CD4-positive, alpha-beta memory T cell (primary cell): ENCODE measurements at regions of chr3 and their contacts with region 1.

Region 1: DNA sequence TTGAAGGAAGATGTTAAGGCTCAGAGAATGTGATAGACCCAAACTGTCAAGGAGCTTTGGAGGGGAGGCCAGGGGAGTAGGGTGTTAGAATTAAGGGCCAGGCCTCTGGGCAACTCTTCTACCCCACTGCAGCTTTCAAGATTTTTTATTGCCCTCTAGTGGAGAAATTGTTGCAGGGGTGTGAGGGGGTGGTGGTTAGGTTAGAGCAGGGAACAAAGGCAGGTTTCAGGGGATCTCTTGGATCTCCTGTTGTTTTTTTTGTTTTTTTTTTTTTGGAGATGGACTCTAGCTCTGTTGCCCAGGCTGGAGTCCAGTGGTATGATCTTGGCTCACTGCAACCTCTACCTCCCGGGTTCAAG is 1.4 kb upstream of the SEC13 start:
- DNase-seq: peak in 3 of 5 donors; percentile 22 to 33 (median 23)
- H3K4me3 ChIP-seq: no peak overlapping the region
- H3K4me3 Mint-ChIP-seq: peak overlapping the region in 3 of 8 donors; percentile 20 to 92 (median 46)
- H3K27ac ChIP-seq: no peak overlapping the region
- H3K27ac Mint-ChIP-seq: peak overlapping the region in 5 of 7 donors; percentile 81 to 97 (median 86)
- H3K4me1 ChIP-seq: peaks cover 28% of the 10 kb centered on the region
- H3K4me1 Mint-ChIP-seq: peaks cover 18 to 42% (median 29%) of the 10 kb centered on the region in 4 donors
- H3K27me3 ChIP-seq: peaks cover 6% of the 10 kb centered on the region
- H3K27me3 Mint-ChIP-seq: peaks cover 2 to 5% of the 10 kb centered on the region in 2 donors

Region 2: DNA sequence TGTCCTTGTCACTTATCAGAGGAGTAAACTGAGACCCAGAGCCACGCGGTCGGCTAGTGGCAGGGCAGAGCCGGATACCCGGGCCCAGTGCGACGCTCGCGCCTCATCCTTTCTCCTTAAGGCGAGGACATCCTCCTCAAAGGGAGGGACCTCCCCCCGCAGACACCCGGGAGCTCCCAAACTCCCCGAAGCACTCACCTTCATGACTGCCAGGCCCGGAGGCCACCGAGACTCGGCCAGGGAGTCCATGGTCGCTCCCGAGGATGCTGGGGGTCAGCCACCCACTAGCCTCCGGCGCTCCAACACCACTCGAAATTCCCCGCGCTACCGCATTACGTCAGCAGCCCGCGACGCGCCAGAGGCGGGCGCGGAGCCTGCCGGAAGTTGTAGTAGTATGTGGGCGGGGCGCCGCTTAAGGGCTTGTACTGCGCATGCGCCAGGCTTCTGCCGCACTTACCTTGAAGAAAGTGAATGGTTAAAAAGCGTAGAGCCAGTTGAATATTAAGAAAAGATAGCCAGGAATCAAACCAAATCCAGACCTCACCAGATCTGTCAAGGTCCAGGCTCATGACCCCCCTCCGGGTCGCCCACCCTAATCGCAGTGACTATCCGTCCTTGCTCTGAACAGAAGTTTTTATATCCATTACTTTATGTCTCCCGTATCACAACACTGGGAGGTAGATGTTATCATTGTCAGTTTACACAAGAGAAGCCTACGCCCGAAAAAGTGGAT is 1359.0 kb before region 1 on chr3 and contains the start of gene RAD18:
- CTCF ChIA-PET with region 1: no interaction called
- POLR2A ChIA-PET with region 1: no interaction called
- intact Hi-C with region 1: loop called (anchors 2 kb)
- DNase-seq: peak; percentile 91 to 94 (median 92)
- H3K4me3 ChIP-seq: peak within 1 kb of the TSS; percentile 87 to 92
- H3K4me3 Mint-ChIP-seq: peak within 1 kb of the TSS; percentile 92 to 97 (median 94)
- H3K27ac ChIP-seq: peak within 1 kb of the TSS; percentile 94
- H3K27ac Mint-ChIP-seq: peak within 1 kb of the TSS; percentile 96 to 99 (median 98)
- H3K4me1 ChIP-seq: peaks cover 21% of the 10 kb centered on the region
- H3K4me1 Mint-ChIP-seq: peaks cover 13 to 39% (median 23%) of the 10 kb centered on the region in 4 donors
- H3K27me3 ChIP-seq: no peaks in the 10 kb centered on the region
- H3K27me3 Mint-ChIP-seq: peaks cover 1% of the 10 kb centered on the region in 2 donors
- total RNA-seq, gene RAD18: 17.5 to 17.6 TPM

Region 3: DNA sequence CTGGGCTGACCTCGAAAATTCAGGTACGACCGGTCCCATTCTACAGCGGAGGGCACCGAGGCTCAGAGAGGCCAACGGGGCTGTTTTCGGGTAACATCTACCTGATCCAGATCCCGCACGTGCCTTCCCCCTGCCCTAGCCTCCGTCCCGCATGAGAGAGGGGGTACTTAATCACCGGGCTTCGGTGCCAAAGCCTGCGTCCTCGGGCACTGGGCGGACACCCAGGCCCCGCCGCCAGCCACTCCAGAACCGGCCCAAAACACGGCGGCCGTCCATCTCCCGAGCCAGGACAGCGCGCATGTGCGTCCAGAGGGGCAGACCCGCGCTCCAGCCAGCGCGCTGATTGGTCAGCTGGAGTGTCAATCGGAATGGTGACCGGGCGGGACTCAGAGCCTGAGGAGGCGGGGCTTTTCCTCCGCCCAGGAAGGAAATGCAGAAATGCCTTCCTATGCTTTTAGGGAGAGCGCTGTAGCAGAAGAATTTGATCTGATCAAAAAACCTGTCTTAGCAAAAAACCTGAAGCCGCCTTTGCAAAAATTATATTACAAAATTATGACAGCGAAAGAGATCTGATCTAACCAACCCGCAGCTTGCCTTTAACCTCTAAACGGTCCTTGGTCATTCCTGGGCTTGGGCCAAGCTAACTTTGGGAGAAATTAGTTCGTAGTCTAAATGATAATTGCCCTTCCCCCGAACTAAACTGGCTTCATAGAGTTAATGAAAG is 478.5 kb before region 1 on chr3 and contains the start of gene RPUSD3:
- CTCF ChIA-PET with region 1: interaction called, 3 read pairs
- POLR2A ChIA-PET with region 1: no interaction called
- intact Hi-C with region 1: loop called (anchors 2 kb)
- DNase-seq: peak; percentile 92 to 98 (median 93)
- H3K4me3 ChIP-seq: peak within 1 kb of the TSS; percentile 80 to 92
- H3K4me3 Mint-ChIP-seq: peak within 1 kb of the TSS; percentile 96 to 99 (median 97)
- H3K27ac ChIP-seq: peak within 1 kb of the TSS; percentile 65
- H3K27ac Mint-ChIP-seq: peak within 1 kb of the TSS; percentile 87 to 97 (median 92)
- H3K4me1 ChIP-seq: peaks cover 23% of the 10 kb centered on the region
- H3K4me1 Mint-ChIP-seq: peaks cover 10 to 36% (median 21%) of the 10 kb centered on the region in 4 donors
- H3K27me3 ChIP-seq: no peaks in the 10 kb centered on the region
- H3K27me3 Mint-ChIP-seq: no peaks in the 10 kb centered on the region
- total RNA-seq, gene RPUSD3: 63.3 to 67.6 TPM

Region 4: DNA sequence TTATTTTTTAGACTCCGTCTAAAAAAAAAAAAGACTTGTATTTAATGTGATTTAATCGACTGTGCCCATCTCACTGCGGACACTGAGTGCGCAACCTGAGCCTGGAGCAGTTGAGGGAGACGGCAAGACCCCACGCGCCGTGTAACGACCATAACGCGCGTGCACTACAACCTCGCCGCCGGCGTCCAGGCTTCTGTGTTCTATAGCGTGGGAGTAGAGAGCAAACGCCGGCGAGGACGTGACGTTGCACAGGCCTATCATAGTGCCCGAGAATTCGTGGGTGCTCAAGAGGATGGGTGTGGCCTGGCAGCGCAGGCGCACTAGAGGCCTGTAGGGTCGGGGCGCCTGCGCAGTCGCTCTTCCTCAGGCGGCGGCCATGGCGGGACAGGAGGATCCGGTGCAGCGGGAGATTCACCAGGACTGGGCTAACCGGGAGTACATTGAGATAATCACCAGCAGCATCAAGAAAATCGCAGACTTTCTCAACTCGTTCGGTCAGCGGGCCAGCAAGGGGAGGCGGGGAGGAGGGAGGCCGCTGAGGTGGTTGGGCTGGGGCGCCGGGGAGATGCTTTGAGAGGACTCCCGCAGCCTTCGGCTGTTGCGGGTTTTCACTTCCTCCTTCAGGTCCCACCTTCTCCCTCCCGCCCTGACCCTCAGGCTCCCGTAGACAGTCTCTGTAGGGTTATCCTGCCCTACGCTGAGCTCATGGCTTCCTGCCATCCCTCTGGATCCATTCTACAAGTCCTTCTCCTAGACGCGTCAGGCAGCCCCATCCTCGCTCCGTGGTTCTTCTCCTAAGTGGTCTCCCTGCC is 206.8 kb before region 1 on chr3 and contains the start of gene BRK1:
- CTCF ChIA-PET with region 1: no interaction called
- POLR2A ChIA-PET with region 1: interaction called, 3 read pairs
- intact Hi-C with region 1: loop called (anchors 1 kb)
- DNase-seq: peak; percentile 89 to 95 (median 93)
- H3K4me3 ChIP-seq: peak within 1 kb of the TSS; percentile 89 to 98
- H3K4me3 Mint-ChIP-seq: peak within 1 kb of the TSS; percentile 95 to 100 (median 99)
- H3K27ac ChIP-seq: peak within 1 kb of the TSS; percentile 84
- H3K27ac Mint-ChIP-seq: peak within 1 kb of the TSS; percentile 96 to 100 (median 98)
- H3K4me1 ChIP-seq: peaks cover 39% of the 10 kb centered on the region
- H3K4me1 Mint-ChIP-seq: peaks cover 22 to 52% (median 31%) of the 10 kb centered on the region in 4 donors
- H3K27me3 ChIP-seq: no peaks in the 10 kb centered on the region
- H3K27me3 Mint-ChIP-seq: peaks cover 0 to 1% of the 10 kb centered on the region in 2 donors
- total RNA-seq, gene BRK1: 73.0 to 78.1 TPM

Region 5: DNA sequence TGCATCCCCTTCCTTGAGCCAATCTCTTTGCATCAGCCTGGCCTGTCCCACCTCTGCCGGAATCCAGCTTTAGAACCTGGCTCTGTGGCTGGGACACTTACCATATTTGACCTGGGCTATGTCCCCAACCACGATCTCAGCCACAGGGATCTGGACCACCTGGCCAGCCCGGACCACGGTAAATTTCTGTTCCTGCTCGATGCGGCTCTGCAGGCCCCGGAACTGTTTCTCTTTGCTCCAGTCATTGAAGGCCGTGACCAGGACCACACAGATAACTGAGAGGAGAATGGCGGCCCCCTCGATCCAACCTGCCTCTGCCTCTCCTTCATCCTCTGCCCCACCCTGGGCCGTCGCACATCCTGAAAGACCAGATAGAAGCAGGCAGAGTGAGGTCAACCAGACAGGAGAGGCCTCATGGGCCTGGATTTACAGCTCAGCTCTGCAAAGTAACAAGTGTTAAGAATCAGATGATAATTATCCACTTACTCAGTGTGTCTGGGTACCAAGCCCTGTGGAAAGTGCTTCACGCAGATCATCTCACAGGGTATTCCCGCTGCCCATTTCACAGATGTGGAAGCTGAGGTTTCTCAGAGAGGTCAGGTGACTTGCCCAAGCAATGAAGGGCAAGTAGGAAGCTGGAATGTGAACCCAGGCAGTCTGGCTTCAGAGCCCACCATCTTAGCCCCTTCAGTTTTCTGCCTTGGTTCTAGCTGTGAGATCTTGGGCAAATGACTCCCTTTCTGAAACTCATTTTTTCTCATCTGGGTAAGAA is 79.8 kb after region 1 on chr3:
- CTCF ChIA-PET with region 1: no interaction called
- POLR2A ChIA-PET with region 1: no interaction called
- intact Hi-C with region 1: no loop called
- DNase-seq: no peak
- H3K4me3 ChIP-seq: no peak overlapping the region
- H3K4me3 Mint-ChIP-seq: no peak overlapping the region
- H3K27ac ChIP-seq: no peak overlapping the region
- H3K27ac Mint-ChIP-seq: no peak overlapping the region
- H3K4me1 ChIP-seq: peaks cover 4% of the 10 kb centered on the region
- H3K4me1 Mint-ChIP-seq: peaks cover 4 to 23% (median 9%) of the 10 kb centered on the region in 4 donors
- H3K27me3 ChIP-seq: no peaks in the 10 kb centered on the region
- H3K27me3 Mint-ChIP-seq: no peaks in the 10 kb centered on the region

Region 6: DNA sequence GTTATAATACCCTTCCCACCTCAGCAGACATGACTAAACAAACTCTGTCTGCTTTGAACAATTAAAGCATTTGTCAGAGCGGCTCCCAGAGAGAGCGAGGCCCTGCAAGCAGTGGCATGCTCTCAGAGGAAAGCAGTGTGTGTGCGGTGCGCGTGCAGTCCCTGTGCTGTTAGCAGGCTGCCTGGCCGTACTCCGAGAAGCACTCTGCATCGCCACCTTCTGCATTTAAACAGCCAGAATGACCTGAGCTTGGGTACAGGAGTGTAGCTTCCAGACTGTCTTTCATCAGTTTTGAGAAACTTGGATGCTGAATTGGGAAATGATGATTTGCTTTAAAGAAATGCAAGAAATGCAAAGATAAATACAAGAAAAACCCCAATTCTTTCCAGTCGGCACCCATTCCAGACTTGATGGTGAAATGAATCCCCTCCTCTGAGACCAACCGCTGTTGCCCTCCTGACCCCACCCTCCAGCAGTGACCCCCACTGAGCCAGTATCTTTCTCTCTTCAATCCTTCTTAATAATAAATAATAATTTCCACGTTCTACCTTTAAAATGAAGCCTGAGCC is 1207.9 kb after region 1 on chr3:
- CTCF ChIA-PET with region 1: no interaction called
- POLR2A ChIA-PET with region 1: no interaction called
- intact Hi-C with region 1: no loop called
- DNase-seq: no peak
- H3K4me3 ChIP-seq: no peak overlapping the region
- H3K4me3 Mint-ChIP-seq: no peak overlapping the region
- H3K27ac ChIP-seq: no peak overlapping the region
- H3K27ac Mint-ChIP-seq: no peak overlapping the region
- H3K4me1 ChIP-seq: no peaks in the 10 kb centered on the region
- H3K4me1 Mint-ChIP-seq: no peaks in the 10 kb centered on the region
- H3K27me3 ChIP-seq: no peaks in the 10 kb centered on the region
- H3K27me3 Mint-ChIP-seq: no peaks in the 10 kb centered on the region